ENCODE measurements at regions of chr17 and their contacts with region 1.

Region 1: GRCh38 chr17:49567871-49568694 is 7.6 kb upstream of the NXPH3 start:
- DNase-seq: peak; percentile 83
- H3K4me3 ChIP-seq: no peak overlapping the region
- H3K27ac ChIP-seq: no peak overlapping the region
- H3K4me1 ChIP-seq: no peaks in the 10 kb centered on the region
- CTCF ChIP-seq: peak; percentile 88

Region 2: DNA sequence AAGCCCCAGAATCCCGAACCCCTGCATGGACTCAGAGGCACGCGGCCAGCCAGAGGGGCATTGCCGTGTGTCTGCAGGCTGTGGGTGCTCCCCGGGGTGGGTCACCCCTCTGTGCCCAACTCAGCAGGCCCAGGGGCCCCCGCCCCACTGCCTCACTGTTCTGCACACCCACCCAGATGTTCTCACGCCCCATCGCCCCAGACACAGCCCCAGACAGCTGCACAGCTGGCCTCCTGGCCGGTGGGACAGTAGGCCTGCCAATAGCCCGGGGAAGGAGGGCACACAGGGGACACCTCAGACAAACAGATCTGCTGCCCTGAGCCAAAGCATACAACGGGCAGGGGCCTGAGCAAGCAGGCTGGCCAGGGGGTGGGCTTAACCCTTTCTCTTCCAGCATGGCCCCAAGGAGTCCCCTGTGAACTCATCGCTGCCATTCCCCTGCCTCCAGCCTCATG is 20.0 kb before region 1 on chr17:
- CTCF ChIA-PET with region 1: no interaction called
- POLR2A ChIA-PET with region 1: no interaction called
- intact Hi-C with region 1: no loop called
- DNase-seq: no peak
- H3K4me3 ChIP-seq: no peak overlapping the region
- H3K27ac ChIP-seq: no peak overlapping the region
- H3K4me1 ChIP-seq: no peaks in the 10 kb centered on the region
- CTCF ChIP-seq: no peak

Region 3: DNA sequence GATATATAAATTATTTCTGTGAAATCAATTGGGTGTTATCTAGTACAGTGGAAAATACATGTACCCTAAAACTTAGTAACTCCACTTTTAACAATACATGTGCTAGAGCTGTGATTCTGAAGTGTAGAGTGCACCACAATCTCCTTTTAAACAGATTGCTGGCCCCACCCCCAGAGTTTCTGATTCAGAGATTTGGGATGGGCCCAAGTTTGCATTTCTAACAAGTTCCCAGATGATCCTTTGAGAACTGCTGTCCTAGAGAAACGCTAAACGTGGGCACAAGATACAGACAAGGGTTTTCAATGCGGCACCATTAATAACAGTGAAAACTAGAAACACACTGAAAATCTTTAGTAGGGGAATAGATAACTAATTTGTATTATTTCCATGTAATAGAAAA is 56.8 kb after region 1 on chr17:
- CTCF ChIA-PET with region 1: no interaction called
- POLR2A ChIA-PET with region 1: no interaction called
- intact Hi-C with region 1: no loop called
- DNase-seq: no peak
- H3K4me3 ChIP-seq: no peak overlapping the region
- H3K27ac ChIP-seq: no peak overlapping the region
- H3K4me1 ChIP-seq: no peaks in the 10 kb centered on the region
- CTCF ChIP-seq: no peak

Region 4: DNA sequence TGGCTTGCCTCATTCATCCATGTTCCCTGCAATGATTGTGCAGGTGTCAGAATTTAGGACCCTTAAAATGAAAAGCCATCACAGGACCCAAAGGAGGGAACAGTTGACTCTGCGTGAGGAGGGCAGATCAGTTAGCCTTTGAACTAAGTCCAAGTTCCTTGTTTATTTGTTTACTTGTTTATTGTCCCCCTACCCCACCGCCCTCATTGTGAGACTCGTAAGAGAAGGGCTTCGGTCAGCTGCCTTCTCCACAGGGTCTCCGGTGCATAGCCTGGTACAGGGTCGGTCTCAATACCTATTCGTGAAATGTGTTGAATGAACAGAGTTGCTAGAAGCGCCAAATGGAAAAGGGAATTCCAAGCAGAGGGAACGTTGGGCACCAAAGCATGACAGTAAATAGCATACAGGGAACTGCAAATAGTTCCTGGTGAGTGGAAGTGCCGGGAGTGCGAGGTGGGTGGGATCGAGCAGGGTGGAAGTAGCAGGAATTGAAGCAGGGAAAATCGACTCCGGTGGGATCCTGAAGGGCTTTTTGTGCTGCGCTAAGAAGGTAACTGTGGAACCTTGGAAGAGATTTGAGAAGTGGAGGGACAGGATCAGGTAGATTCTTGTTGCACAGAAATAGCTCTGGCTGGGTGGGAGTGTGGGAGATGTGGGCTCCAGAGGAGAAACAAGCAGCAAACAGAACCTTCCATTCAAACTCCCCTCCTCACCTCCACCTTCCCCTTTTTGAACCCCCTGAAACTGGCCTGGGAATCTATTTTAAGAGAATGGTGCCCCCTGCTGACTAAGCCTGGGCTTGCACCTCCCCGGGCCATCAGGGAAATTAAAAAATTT is 127.0 kb after region 1 on chr17:
- CTCF ChIA-PET with region 1: no interaction called
- POLR2A ChIA-PET with region 1: no interaction called
- intact Hi-C with region 1: loop called (anchors 1 kb)
- DNase-seq: peak; percentile 76
- H3K4me3 ChIP-seq: no peak overlapping the region
- H3K27ac ChIP-seq: no peak overlapping the region
- H3K4me1 ChIP-seq: peaks cover 10% of the 10 kb centered on the region
- CTCF ChIP-seq: peak; percentile 99

Region 5: GRCh38 chr17:49779739-49780231 is 211.7 kb after region 1 on chr17:
- CTCF ChIA-PET with region 1: no interaction called
- POLR2A ChIA-PET with region 1: no interaction called
- intact Hi-C with region 1: loop called (anchors 2 kb)
- DNase-seq: peak; percentile 61
- H3K4me3 ChIP-seq: no peak overlapping the region
- H3K27ac ChIP-seq: no peak overlapping the region
- H3K4me1 ChIP-seq: no peaks in the 10 kb centered on the region
- CTCF ChIP-seq: peak; percentile 86

Measured in OCI-LY7 (cell line).